ENCODE measurements at regions of chr21 and their contacts with region 1.

Region 1: GRCh38 chr21:25615880-25616279 is 8.6 kb upstream of the MRPL39 start:
- DNase-seq: no peak
- CTCF ChIP-seq: no peak

Region 2: GRCh38 chr21:25682382-25682781 is 66.5 kb after region 1 on chr21:
- in situ Hi-C with region 1: no loop called
- DNase-seq: no peak
- CTCF ChIP-seq: no peak

Region 3: GRCh38 chr21:25862596-25862995 is 246.7 kb after region 1 on chr21:
- in situ Hi-C with region 1: loop called (anchors 10 kb)
- DNase-seq: peak; percentile 43
- CTCF ChIP-seq: peak; percentile 83